Caco-2 (cell line): ENCODE measurements at regions of chr6 and their contacts with region 1.

Region 1: GRCh38 chr6:149545754-149546528 is at the start of gene PPIL4:
- DNase-seq: peak; percentile 93 to 96
- H3K4me3 ChIP-seq: peak within 1 kb of the TSS; percentile 61
- H3K4me3 Mint-ChIP-seq: peak within 1 kb of the TSS; percentile 81
- H3K27ac Mint-ChIP-seq: peak within 1 kb of the TSS; percentile 98
- H3K4me1 ChIP-seq: no peaks in the 10 kb centered on the region
- H3K4me1 Mint-ChIP-seq: peaks cover 16% of the 10 kb centered on the region
- H3K27me3 ChIP-seq: no peaks in the 10 kb centered on the region
- H3K27me3 Mint-ChIP-seq: no peaks in the 10 kb centered on the region
- CTCF ChIP-seq: peak; percentile 91 to 93
- total RNA-seq, gene PPIL4: 28.3 and 28.4 TPM in 2 replicates

Region 2: DNA sequence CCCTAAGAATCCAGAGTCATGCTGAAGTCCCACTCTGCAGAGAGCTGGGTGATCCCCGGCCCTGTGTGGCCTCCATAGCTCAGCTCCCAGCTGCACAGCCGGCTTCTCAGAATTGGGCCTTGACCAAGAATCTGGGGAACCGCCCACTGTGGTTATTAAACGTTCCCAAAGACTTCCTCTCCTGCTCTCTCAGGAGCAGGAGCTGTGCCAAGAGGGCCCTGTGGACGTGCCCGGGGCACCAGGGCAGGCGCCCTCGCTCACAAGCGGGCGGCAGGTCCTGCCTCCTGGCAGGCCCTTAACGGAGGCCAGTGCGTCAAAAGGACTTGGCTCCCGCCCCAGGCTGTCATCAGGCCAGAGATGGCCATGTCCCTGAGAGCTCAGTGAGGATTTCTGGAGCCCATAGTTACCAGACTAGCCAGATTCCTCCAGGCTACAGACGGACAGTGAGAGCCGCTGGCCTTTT is 91.5 kb before region 1 on chr6:
- CTCF ChIA-PET with region 1: no interaction called
- POLR2A ChIA-PET with region 1: no interaction called
- intact Hi-C with region 1: no loop called
- DNase-seq: no peak
- H3K4me3 ChIP-seq: no peak overlapping the region
- H3K4me3 Mint-ChIP-seq: no peak overlapping the region
- H3K27ac Mint-ChIP-seq: no peak overlapping the region
- H3K4me1 ChIP-seq: peaks cover 10% of the 10 kb centered on the region; the same call in 1 of the 2 replicates
- H3K4me1 Mint-ChIP-seq: no peaks in the 10 kb centered on the region
- H3K27me3 ChIP-seq: no peaks in the 10 kb centered on the region
- H3K27me3 Mint-ChIP-seq: no peaks in the 10 kb centered on the region
- CTCF ChIP-seq: no peak

Region 3: DNA sequence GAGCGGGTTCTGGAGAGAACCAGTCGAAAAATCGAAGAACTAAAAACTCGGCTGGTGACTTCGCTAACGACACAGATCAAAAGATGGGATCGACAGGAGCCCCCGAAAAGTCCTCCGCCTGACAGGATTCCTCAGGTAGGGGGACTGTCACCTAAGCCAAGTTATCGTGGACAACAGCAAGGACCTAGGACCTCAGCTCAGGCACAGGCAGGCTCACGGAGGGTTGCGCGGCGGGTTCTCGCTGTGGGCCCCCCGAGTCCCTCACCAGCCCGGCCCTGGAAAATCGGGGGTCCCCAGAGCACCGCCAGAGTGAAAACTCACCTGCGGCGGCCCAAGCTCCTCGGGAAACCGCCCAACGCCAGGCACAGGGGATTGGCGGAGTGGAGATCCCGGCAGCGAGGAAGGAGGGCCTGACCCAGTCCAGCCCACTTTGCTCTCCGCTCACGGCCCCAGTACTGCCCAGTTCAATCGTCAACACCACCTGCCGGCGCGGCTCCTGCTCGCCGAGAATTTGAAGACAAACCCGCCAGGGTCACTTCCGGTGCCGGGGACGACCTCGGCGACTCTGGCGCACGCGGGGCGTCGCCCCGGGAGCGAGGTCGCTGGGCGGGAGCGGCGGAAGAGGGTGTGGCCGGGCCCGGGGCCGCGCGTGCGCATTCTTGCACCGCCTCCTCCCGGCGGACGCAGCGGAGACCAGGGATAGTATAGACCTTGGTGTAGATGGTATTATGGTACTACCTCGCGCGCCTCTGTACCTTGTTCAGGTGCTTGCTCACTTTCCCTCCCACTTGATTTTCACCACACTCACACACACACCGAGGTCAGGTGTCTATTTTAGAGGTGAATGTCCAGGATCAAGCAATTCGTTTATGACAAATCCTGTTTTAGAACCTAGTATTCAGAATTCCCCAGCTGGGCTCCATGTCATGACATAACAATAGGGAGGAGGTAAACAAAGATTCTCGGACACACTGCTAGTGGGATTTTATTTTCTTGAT is 102.5 kb after region 1 on chr6 and contains the start of gene KATNA1:
- CTCF ChIA-PET with region 1: no interaction called
- POLR2A ChIA-PET with region 1: no interaction called
- intact Hi-C with region 1: loop called (anchors 1 kb)
- DNase-seq: peak; percentile 95 to 96
- H3K4me3 ChIP-seq: peak within 1 kb of the TSS; percentile 68
- H3K4me3 Mint-ChIP-seq: peak within 1 kb of the TSS; percentile 84
- H3K27ac Mint-ChIP-seq: peak within 1 kb of the TSS; percentile 73
- H3K4me1 ChIP-seq: 0 out of 2 replicates have a peak, but pooled peaks cover 10% of the 10 kb centered on the region
- H3K4me1 Mint-ChIP-seq: no peaks in the 10 kb centered on the region
- H3K27me3 ChIP-seq: no peaks in the 10 kb centered on the region
- H3K27me3 Mint-ChIP-seq: no peaks in the 10 kb centered on the region
- CTCF ChIP-seq: no peak
- total RNA-seq, gene KATNA1: 16.7 and 19.2 TPM in 2 replicates